ENCODE measurements at regions of chr10 and their contacts with region 1.

Region 1: DNA sequence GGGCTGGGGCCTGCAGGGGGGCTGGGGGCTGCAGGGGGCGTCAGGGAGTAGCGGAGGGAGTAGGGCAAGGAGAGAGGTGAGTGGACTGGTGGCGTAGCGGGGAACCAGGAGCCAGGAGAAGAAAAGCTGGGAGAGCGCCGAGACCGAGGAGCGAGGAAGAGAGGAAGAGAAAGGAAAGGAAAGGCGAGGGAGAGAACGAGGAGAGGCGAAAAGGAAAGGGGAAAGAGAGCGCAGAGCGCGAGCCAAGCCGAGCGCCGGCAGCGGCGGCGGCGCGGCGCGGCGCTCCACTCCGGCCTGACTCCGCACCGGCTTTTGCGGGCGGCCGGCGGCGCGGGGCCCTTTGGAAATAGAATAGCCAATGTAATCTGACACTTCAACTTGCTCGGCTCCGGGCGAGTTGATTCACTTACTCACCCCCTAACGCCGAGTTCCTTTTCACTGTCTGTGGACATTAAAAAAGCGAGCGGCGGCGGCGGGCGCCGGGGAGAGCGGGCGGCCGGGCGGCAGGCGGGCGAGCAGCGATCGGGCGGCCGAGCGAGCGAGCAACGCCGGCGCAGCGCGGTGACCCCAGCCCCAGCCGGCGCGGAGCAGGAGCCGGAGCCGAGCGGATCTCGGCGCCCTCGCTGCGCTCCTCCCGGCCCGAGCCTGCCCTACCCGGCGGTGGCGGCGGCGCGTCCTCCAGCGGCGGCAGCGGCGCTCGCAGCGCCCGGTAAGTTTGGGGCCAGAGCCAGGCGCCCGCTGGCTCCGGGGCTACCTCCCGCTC is at the start of gene ZMIZ1:
- DNase-seq: peak; percentile 61 to 87 (median 80)
- ATAC-seq: peak; percentile 60
- H3K4me3 ChIP-seq: peak within 1 kb of the TSS; percentile 83 to 94
- H3K4me3 Mint-ChIP-seq: peak within 1 kb of the TSS; percentile 94
- H3K27ac ChIP-seq: peak within 1 kb of the TSS; percentile 36 to 44
- H3K27ac Mint-ChIP-seq: peak within 1 kb of the TSS; percentile 85
- H3K4me1 ChIP-seq: peaks cover 36% of the 10 kb centered on the region
- H3K4me1 Mint-ChIP-seq: peaks cover 48% of the 10 kb centered on the region
- H3K27me3 ChIP-seq: no peaks in the 10 kb centered on the region
- H3K27me3 Mint-ChIP-seq: no peaks in the 10 kb centered on the region
- CTCF ChIP-seq: no peak
- total RNA-seq, gene ZMIZ1: 10.1 to 10.8 TPM

Region 2: DNA sequence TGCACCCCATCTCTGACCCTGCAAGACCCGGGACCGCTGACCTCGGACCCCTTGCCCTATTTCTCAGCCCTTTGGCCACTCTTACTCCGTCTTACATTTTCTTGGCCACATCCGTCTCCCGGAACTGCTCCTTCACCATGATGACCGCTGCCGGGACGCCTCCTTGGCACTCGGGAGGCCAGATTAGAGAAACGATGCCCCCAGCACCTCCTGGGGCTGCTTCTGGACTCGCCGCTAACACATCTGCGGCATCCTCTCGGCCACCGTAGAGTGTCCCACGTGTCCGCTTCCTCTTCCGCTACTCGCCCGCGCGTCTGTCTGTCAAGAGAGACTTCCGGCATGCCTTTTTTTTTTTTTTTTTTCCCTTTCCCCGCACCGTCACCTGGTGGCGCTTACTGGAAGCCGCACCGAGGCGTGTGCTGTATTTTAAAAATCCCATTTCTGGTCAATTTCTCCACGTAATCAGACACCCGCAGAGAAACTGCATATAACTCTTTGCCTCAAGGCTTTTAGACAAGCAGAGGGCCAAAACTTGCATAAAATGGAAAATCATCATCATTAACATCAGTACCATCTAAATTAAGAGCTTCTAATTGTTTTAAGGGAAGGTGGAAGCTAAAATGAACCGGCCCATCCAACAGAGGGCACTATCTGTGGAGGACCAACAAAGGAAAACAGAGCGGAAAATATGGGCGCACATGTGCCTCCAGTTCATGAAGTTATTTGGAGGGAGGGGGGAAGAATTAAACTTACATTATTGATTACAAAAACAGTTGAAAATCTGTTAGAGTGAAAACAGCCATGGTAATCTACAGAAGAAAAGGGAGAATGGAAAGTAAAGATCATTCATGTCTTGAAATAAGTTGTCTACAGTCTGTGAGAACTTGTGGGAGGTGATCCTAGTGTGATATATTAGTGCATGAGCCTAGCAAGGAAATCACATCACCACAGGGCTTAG is 1039.2 kb before region 1 on chr10 and contains the start of gene POLR3A:
- CTCF ChIA-PET with region 1: no interaction called
- POLR2A ChIA-PET with region 1: no interaction called
- intact Hi-C with region 1: loop called in 1 of 2 experiments (anchors 5 kb)
- DNase-seq: peak; percentile 81 to 97 (median 90)
- ATAC-seq: peak; percentile 56
- H3K4me3 ChIP-seq: peak within 1 kb of the TSS; percentile 92 to 99
- H3K4me3 Mint-ChIP-seq: peak within 1 kb of the TSS; percentile 99
- H3K27ac ChIP-seq: peak within 1 kb of the TSS; percentile 55 to 70
- H3K27ac Mint-ChIP-seq: peak within 1 kb of the TSS; percentile 95
- H3K4me1 ChIP-seq: peaks cover 17% of the 10 kb centered on the region
- H3K4me1 Mint-ChIP-seq: peaks cover 40% of the 10 kb centered on the region
- H3K27me3 ChIP-seq: no peaks in the 10 kb centered on the region
- H3K27me3 Mint-ChIP-seq: no peaks in the 10 kb centered on the region
- CTCF ChIP-seq: peak; percentile 75
- total RNA-seq, gene POLR3A: 5.9 to 7.0 TPM

Region 3: GRCh38 chr10:78852466-78853240 is 216.1 kb before region 1 on chr10:
- CTCF ChIA-PET with region 1: no interaction called
- POLR2A ChIA-PET with region 1: no interaction called
- intact Hi-C with region 1: loop called in 1 of 2 experiments (anchors 5 kb)
- DNase-seq: peak in 3 of 9 experiments; percentile 26 to 42 (median 32)
- ATAC-seq: no peak
- H3K4me3 ChIP-seq: no peak overlapping the region
- H3K4me3 Mint-ChIP-seq: no peak overlapping the region
- H3K27ac ChIP-seq: no peak overlapping the region
- H3K27ac Mint-ChIP-seq: no peak overlapping the region
- H3K4me1 ChIP-seq: no peaks in the 10 kb centered on the region
- H3K4me1 Mint-ChIP-seq: no peaks in the 10 kb centered on the region
- H3K27me3 ChIP-seq: no peaks in the 10 kb centered on the region
- H3K27me3 Mint-ChIP-seq: no peaks in the 10 kb centered on the region
- CTCF ChIP-seq: peak; percentile 19

Region 4: GRCh38 chr10:78972947-78973900 is 95.5 kb before region 1 on chr10:
- CTCF ChIA-PET with region 1: interaction called, 3 read pairs
- POLR2A ChIA-PET with region 1: no interaction called
- intact Hi-C with region 1: loop called (anchors 1 kb)
- DNase-seq: peak; percentile 11 to 89 (median 68)
- ATAC-seq: peak; percentile 69
- H3K4me3 ChIP-seq: peak overlapping the region; percentile 39 to 54
- H3K4me3 Mint-ChIP-seq: peak overlapping the region; percentile 83
- H3K27ac ChIP-seq: peak overlapping the region in 1 of 2 experiments; percentile 19
- H3K27ac Mint-ChIP-seq: peak overlapping the region; percentile 80
- H3K4me1 ChIP-seq: peaks cover 14% of the 10 kb centered on the region
- H3K4me1 Mint-ChIP-seq: peaks cover 14% of the 10 kb centered on the region
- H3K27me3 ChIP-seq: no peaks in the 10 kb centered on the region
- H3K27me3 Mint-ChIP-seq: no peaks in the 10 kb centered on the region
- CTCF ChIP-seq: no peak

Region 5: GRCh38 chr10:78997646-78998618 is 70.8 kb before region 1 on chr10:
- CTCF ChIA-PET with region 1: no interaction called
- POLR2A ChIA-PET with region 1: no interaction called
- intact Hi-C with region 1: no loop called
- DNase-seq: no peak
- ATAC-seq: no peak
- H3K4me3 ChIP-seq: no peak overlapping the region
- H3K4me3 Mint-ChIP-seq: no peak overlapping the region
- H3K27ac ChIP-seq: no peak overlapping the region
- H3K27ac Mint-ChIP-seq: no peak overlapping the region
- H3K4me1 ChIP-seq: peaks cover 3% of the 10 kb centered on the region
- H3K4me1 Mint-ChIP-seq: peaks cover 6% of the 10 kb centered on the region
- H3K27me3 ChIP-seq: no peaks in the 10 kb centered on the region
- H3K27me3 Mint-ChIP-seq: peaks cover 3% of the 10 kb centered on the region
- CTCF ChIP-seq: no peak

Region 6: GRCh38 chr10:79047875-79048638 is 20.7 kb before region 1 on chr10:
- CTCF ChIA-PET with region 1: interaction called, 6 read pairs
- POLR2A ChIA-PET with region 1: interaction called, 4 read pairs
- intact Hi-C with region 1: loop called in 1 of 2 experiments (anchors 1 kb)
- DNase-seq: peak; percentile 22 to 82 (median 57)
- ATAC-seq: peak; percentile 78
- H3K4me3 ChIP-seq: peak overlapping the region; percentile 40 to 53
- H3K4me3 Mint-ChIP-seq: peak overlapping the region; percentile 74
- H3K27ac ChIP-seq: peak overlapping the region; percentile 49 to 79
- H3K27ac Mint-ChIP-seq: peak overlapping the region; percentile 85
- H3K4me1 ChIP-seq: peaks cover 47% of the 10 kb centered on the region
- H3K4me1 Mint-ChIP-seq: peaks cover 51% of the 10 kb centered on the region
- H3K27me3 ChIP-seq: no peaks in the 10 kb centered on the region
- H3K27me3 Mint-ChIP-seq: no peaks in the 10 kb centered on the region
- CTCF ChIP-seq: no peak